ENCODE measurements at regions of chr2 and their contacts with region 1.

Region 1: GRCh38 chr2:28452534-28453081 is 43.3 kb upstream of the PLB1 start:
- DNase-seq: peak; percentile 65 to 70
- ATAC-seq: peak; percentile 75 to 92
- H3K4me3 ChIP-seq: no peak overlapping the region
- H3K27ac ChIP-seq: peak overlapping the region; percentile 70 to 87
- H3K4me1 ChIP-seq: peaks cover 44% of the 10 kb centered on the region
- CTCF ChIP-seq: peak; percentile 94
- EP300 ChIP-seq: no peak
- POLR2A ChIP-seq: no peak
- RAD21 ChIP-seq: peak; percentile 98 to 99

Region 2: DNA sequence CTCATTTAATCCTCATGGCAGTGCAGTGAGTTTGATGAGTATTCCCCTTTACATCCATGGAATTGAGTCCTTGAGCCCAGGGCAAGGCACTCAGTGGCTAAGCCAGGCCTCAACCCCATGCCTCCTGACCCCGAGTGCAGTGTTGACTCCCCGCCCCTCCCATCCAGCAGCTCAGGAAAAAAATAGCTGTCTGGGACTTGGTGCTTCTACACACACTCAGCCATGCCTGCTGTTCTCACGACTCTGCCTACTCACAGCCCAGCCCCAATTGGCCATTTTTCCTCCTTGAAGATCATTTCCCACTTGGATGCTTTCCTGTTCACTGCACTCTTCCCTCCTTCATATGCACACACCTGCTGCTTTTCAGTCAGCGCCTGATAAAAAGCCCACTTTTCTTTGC is 51.2 kb before region 1 on chr2:
- CTCF ChIA-PET with region 1: interaction called, 17 read pairs
- POLR2A ChIA-PET with region 1: no interaction called
- DNase-seq: no peak
- ATAC-seq: peak in 1 of 2 experiments; percentile 5; a peak in 1 of 6 replicates
- H3K4me3 ChIP-seq: no peak overlapping the region
- H3K27ac ChIP-seq: peak overlapping the region in 1 of 2 experiments; percentile 28; a peak in 1 of 6 replicates
- H3K4me1 ChIP-seq: peaks cover 95% of the 10 kb centered on the region
- CTCF ChIP-seq: no peak
- EP300 ChIP-seq: no peak
- POLR2A ChIP-seq: no peak
- RAD21 ChIP-seq: no peak

Region 3: DNA sequence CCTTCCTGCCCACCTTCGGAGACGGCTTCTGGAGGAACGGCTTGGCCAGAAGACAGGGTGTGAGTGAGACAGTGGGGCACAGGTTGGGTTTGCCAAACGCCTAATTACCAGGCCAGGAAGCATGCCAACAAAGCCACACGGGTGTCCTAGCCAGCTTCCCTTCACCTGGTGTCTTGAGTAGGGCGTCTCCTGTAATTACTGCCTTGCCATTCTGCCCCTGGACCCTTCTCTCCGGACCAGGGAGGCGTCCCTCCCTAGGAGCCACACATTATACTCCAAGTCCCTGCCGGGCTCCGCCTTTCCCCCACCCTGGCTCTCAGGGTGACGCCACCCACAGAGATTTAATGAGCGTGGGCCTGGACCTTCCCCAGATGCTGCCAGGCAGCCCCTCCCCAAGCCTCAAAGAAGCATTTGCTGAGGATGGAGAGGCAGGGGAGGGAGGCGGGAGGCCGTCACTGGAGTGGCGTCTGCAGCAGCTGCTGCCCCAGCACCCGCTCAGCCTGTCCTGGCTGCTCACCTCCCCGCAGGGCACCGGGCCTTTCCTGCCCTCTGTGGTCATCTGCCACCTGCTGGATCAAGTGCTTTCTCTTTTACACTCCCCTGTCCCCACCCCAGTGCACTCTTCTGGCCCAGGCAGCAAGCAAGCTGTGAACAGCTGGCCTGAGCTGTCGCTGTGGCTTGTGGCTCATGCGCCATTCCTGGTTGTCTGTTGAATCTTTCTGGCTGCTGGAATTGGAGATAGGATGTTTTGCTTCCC is 39.3 kb before region 1 on chr2:
- CTCF ChIA-PET with region 1: interaction called, 14 read pairs
- POLR2A ChIA-PET with region 1: no interaction called
- DNase-seq: peak in 1 of 2 experiments; percentile 51
- ATAC-seq: peak; percentile 40 to 63; a peak in 5 of 6 replicates
- H3K4me3 ChIP-seq: no peak overlapping the region
- H3K27ac ChIP-seq: peak overlapping the region in 1 of 2 experiments; percentile 38; a peak in 3 of 6 replicates
- H3K4me1 ChIP-seq: peaks cover 45% of the 10 kb centered on the region
- CTCF ChIP-seq: no peak
- EP300 ChIP-seq: no peak
- POLR2A ChIP-seq: no peak
- RAD21 ChIP-seq: peak in 1 of 2 experiments; percentile 29; a peak in 1 of 5 replicates

Region 4: GRCh38 chr2:28436525-28437051 is 16.0 kb before region 1 on chr2:
- CTCF ChIA-PET with region 1: interaction called, 12 read pairs
- POLR2A ChIA-PET with region 1: no interaction called
- DNase-seq: peak in 1 of 2 experiments; percentile 68
- ATAC-seq: peak; percentile 15 to 56; a peak in 3 of 6 replicates
- H3K4me3 ChIP-seq: no peak overlapping the region
- H3K27ac ChIP-seq: peak overlapping the region; percentile 63 to 83
- H3K4me1 ChIP-seq: peaks cover 31% of the 10 kb centered on the region
- CTCF ChIP-seq: no peak
- EP300 ChIP-seq: no peak
- POLR2A ChIP-seq: no peak
- RAD21 ChIP-seq: no peak

Region 5: DNA sequence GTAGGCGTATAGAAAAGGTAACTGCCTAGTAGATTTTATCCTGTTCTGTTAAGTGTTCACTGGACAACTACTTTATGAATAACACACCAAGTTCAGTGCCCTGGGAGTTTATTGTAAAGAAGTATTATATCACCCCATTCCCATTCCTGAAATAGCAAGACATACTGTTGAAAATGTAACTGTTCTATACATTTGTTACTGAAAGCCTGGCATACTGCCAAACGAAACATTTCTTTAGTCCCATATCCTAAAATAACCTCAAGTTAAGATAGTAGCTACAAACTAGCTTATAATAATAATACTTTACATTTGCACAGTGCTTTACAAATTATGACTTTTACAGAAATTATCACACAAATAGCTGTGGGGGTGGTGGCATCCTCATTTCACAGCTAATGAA is 383.2 kb after region 1 on chr2:
- CTCF ChIA-PET with region 1: no interaction called
- POLR2A ChIA-PET with region 1: no interaction called
- DNase-seq: no peak
- ATAC-seq: no peak
- H3K4me3 ChIP-seq: no peak overlapping the region
- H3K27ac ChIP-seq: no peak overlapping the region
- H3K4me1 ChIP-seq: no peaks in the 10 kb centered on the region
- CTCF ChIP-seq: no peak
- EP300 ChIP-seq: no peak
- POLR2A ChIP-seq: no peak
- RAD21 ChIP-seq: no peak